Mammary epithelial cell (primary cell): ENCODE measurements at regions of chr16 and their contacts with region 1.

Region 1: DNA sequence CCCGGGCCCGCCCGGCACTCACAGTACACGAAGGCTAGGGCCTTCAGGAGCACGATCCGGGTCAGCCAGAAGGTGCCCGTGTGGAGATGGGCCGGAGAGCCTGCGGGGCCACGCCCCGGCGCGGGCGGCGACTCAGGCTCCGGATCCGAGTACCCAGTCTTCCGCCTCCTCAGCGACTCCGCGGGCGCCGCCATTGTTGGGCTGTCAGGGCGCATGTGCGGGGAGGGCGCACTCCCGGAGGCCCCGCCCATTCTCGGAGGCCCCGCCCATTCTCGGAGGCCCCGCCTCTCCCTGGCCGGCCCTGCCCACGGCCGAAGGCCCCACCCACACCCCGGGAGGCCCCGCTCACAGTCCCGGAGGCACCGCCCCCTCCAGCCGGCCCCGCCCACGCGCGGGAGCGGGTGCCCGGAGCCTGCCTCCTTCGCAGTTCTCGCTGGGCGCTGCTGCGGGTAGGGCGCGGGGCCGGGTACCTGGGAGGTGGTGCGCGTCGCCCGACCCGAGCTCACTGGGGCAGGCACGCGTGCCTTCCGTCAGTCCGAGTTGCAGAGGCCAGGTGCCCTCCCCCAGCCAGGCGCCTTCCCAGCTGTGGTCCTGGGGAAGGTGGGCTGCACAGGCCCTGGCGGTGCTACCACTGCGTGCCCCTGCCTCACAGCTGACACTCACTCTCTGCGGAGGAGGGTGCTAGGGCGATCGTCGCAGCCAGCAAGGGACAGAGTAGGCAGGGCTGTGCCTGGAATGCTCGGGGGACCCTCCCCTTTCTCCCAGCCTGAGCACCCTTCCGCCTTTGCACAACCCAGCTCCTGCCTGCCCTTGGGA is at the start of gene LMF1:
- DNase-seq: peak; percentile 86
- H3K4me3 ChIP-seq: peak within 1 kb of the TSS; percentile 40 to 72 (median 64)
- H3K27ac ChIP-seq: no peak within 1 kb of the TSS
- H3K4me1 ChIP-seq: peaks cover 13% of the 10 kb centered on the region
- H3K27me3 ChIP-seq: no peaks in the 10 kb centered on the region
- CTCF ChIP-seq: no peak
- total RNA-seq, gene LMF1: 11.0 to 25.3 TPM

Region 2: GRCh38 chr16:714558-715476 is 256.2 kb before region 1 on chr16 and contains the start of gene METRN:
- CTCF ChIA-PET with region 1: no interaction called
- dilution Hi-C with region 1: loop called (anchors 5 kb)
- in situ Hi-C with region 1: no loop called
- intact Hi-C with region 1: loop called (anchors 2 kb)
- DNase-seq: peak; percentile 75
- H3K4me3 ChIP-seq: peak within 1 kb of the TSS; percentile 37 to 64 (median 63)
- H3K27ac ChIP-seq: no peak within 1 kb of the TSS
- H3K4me1 ChIP-seq: peaks cover 28% of the 10 kb centered on the region
- H3K27me3 ChIP-seq: peaks cover 7% of the 10 kb centered on the region
- CTCF ChIP-seq: no peak
- total RNA-seq, gene METRN: 22.2 to 53.1 TPM

Region 3: GRCh38 chr16:914440-914839 is 56.5 kb before region 1 on chr16:
- CTCF ChIA-PET with region 1: no interaction called
- dilution Hi-C with region 1: loop called (anchors 10 kb)
- in situ Hi-C with region 1: no loop called
- intact Hi-C with region 1: no loop called
- DNase-seq: peak; percentile 21
- H3K4me3 ChIP-seq: no peak overlapping the region
- H3K27ac ChIP-seq: no peak overlapping the region
- H3K4me1 ChIP-seq: no peaks in the 10 kb centered on the region
- H3K27me3 ChIP-seq: no peaks in the 10 kb centered on the region
- CTCF ChIP-seq: no peak

Region 4: DNA sequence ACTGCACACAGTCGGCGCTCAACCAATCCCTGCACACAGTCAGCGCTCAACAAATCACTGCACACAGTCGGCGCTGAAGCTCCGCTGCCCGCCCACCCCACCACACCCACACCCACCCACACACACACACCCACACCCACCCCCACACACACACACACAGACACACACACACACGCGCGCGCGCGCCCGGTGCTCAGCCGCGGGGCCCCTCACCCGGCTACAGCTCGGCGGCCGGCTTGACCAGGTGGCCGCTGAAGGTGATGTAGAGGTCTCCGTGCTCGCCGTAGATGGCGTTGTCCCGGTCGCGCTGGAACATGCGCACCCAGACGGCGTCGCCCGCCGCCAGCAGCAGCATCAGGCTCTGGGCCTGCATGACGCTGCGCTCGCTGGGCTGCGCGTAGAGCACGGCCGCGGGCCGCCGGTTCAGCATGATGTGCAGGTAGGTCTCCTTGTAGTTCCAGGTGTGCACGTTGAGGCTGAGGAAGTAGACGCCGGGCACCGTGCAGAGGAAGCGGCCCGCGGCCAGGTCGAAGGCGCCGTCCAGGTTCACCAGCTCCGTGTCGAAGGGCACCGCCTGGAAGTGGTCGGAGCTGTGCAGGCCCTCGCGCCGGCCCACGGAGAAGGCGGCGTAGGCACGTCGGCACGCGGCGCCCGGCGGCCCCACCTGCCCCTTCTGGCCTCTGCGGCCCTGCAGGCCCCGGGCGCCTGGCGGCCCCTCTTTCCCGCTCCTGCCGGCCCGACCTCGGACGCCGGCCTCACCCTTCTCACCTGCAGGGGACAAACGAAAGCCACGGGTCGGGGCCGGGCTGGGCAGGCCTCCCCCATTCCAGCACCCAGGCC is 122.5 kb after region 1 on chr16:
- CTCF ChIA-PET with region 1: no interaction called
- dilution Hi-C with region 1: no loop called
- in situ Hi-C with region 1: no loop called
- intact Hi-C with region 1: no loop called
- DNase-seq: no peak
- H3K4me3 ChIP-seq: no peak overlapping the region
- H3K27ac ChIP-seq: no peak overlapping the region
- H3K4me1 ChIP-seq: no peaks in the 10 kb centered on the region
- H3K27me3 ChIP-seq: peaks cover 7% of the 10 kb centered on the region
- CTCF ChIP-seq: no peak

Region 5: GRCh38 chr16:1113889-1114526 is 143.0 kb after region 1 on chr16:
- CTCF ChIA-PET with region 1: no interaction called
- dilution Hi-C with region 1: loop called (anchors 5 kb)
- in situ Hi-C with region 1: no loop called
- intact Hi-C with region 1: no loop called
- DNase-seq: no peak
- H3K4me3 ChIP-seq: no peak overlapping the region
- H3K27ac ChIP-seq: no peak overlapping the region
- H3K4me1 ChIP-seq: peaks cover 3% of the 10 kb centered on the region
- H3K27me3 ChIP-seq: peaks cover 6% of the 10 kb centered on the region
- CTCF ChIP-seq: no peak

Region 6: DNA sequence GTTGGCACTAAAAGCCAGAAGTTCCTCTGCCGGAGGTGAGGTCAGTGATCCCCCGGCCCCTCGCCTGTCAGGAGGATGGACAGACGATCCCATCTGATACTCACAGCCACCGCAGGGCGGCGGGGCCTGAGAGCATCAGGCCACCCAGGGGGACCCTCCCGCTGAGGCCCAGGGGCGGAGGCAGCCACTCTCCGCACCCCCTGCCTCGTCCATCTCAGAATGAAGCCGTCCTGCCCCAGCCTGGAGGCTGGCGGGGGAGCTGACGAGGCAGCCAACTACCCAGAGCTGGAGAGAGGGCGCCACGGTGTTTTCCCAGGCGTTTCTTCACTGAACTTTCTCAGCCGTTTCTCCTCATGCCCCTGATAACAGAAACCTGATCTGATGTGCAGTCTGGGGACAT is 307.5 kb after region 1 on chr16:
- CTCF ChIA-PET with region 1: no interaction called
- dilution Hi-C with region 1: loop called (anchors 5 kb)
- in situ Hi-C with region 1: no loop called
- intact Hi-C with region 1: no loop called
- DNase-seq: no peak
- H3K4me3 ChIP-seq: no peak overlapping the region
- H3K27ac ChIP-seq: no peak overlapping the region
- H3K4me1 ChIP-seq: no peaks in the 10 kb centered on the region
- H3K27me3 ChIP-seq: peaks cover 4% of the 10 kb centered on the region
- CTCF ChIP-seq: no peak